Activated CD4-positive, alpha-beta T cell treated with anti-CD3 and anti-CD28 coated beads, Interleukin-2, amount 10 ng/mL, durations not matched to agents 24 days and 14 days (primary cell): ENCODE measurements at regions of chr14 and their contacts with region 1.

Region 1: GRCh38 chr14:63852817-63853731 is at the start of gene SYNE2:
- DNase-seq: peak; percentile 96
- H3K4me3 Mint-ChIP-seq: peak within 1 kb of the TSS; percentile 96
- H3K27ac Mint-ChIP-seq: peak within 1 kb of the TSS; percentile 97
- H3K4me1 Mint-ChIP-seq: peaks cover 36% of the 10 kb centered on the region
- H3K27me3 Mint-ChIP-seq: peaks cover 14% of the 10 kb centered on the region
- total RNA-seq, gene SYNE2: 22.0 and 22.4 TPM in 2 replicates

Region 2: DNA sequence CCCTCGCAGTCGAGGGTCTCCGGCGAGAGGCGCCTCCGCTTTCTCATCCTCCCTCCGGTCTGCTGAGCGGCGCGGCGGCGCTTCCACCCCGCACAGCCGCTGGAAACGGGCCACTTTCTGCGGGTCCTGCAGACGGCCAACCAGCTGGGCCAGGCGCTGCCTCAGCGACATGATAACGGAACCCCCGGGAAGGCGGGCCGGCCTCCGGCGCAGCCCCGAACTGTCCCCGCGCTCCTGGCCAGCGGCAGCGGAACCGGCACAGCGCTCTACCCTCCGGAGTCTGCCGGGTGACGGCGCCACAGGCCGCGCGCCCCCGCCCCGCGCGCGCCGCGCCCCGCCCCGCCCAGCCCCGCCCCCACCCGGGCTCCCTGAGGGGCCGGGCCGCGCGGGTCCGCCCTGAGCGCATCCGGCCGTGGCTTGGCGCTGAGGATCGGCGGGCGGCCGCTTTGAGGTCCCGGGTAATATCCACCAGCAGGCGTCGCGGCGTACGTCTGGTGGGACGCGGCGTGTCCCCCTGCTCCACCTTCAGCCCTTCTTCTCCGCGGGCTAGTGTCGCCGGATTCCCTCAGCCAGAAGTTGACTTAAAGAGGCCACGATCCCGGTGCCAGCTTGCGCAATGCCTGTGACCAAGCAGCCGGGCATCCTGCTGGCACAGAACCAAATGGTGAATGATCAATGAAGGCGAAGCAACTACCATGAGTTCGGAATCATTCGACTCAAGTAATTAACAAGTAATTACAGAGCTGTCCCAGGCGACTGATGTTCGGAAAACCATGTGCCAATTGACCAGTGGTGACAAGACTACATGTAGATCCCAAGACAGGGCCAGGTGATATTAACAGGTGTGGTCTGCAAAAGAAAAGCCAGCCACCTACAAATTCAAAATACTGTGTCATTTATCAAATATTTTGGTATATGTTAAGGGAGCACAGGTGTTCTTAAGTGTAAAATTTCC is 125.0 kb before region 1 on chr14 and contains the start of gene SGPP1:
- intact Hi-C with region 1: loop called (anchors 5 kb)
- DNase-seq: peak; percentile 94
- H3K4me3 Mint-ChIP-seq: peak within 1 kb of the TSS; percentile 100
- H3K27ac Mint-ChIP-seq: peak within 1 kb of the TSS; percentile 98
- H3K4me1 Mint-ChIP-seq: peaks cover 31% of the 10 kb centered on the region
- H3K27me3 Mint-ChIP-seq: peaks cover 19% of the 10 kb centered on the region
- total RNA-seq, gene SGPP1: 12.2 and 13.3 TPM in 2 replicates

Region 3: GRCh38 chr14:63800651-63801375 is 52.3 kb before region 1 on chr14:
- intact Hi-C with region 1: no loop called
- DNase-seq: no peak
- H3K4me3 Mint-ChIP-seq: no peak overlapping the region
- H3K27ac Mint-ChIP-seq: no peak overlapping the region
- H3K4me1 Mint-ChIP-seq: peaks cover 2% of the 10 kb centered on the region
- H3K27me3 Mint-ChIP-seq: peaks cover 15% of the 10 kb centered on the region

Region 4: GRCh38 chr14:63867933-63868921 is 15.2 kb after region 1 on chr14:
- intact Hi-C with region 1: loop called (anchors 1 kb)
- DNase-seq: peak; percentile 81
- H3K4me3 Mint-ChIP-seq: peak overlapping the region; percentile 45
- H3K27ac Mint-ChIP-seq: peak overlapping the region; percentile 15
- H3K4me1 Mint-ChIP-seq: peaks cover 42% of the 10 kb centered on the region
- H3K27me3 Mint-ChIP-seq: no peaks in the 10 kb centered on the region

Region 5: GRCh38 chr14:63901434-63902085 is 48.5 kb after region 1 on chr14:
- intact Hi-C with region 1: loop called (anchors 5 kb)
- DNase-seq: no peak
- H3K4me3 Mint-ChIP-seq: no peak overlapping the region
- H3K27ac Mint-ChIP-seq: no peak overlapping the region
- H3K4me1 Mint-ChIP-seq: peaks cover 26% of the 10 kb centered on the region
- H3K27me3 Mint-ChIP-seq: no peaks in the 10 kb centered on the region

Region 6: GRCh38 chr14:63933110-63933509 is 80.0 kb after region 1 on chr14:
- intact Hi-C with region 1: loop called (anchors 5 kb)
- DNase-seq: peak; percentile 75
- H3K4me3 Mint-ChIP-seq: peak overlapping the region; percentile 40
- H3K27ac Mint-ChIP-seq: peak overlapping the region; percentile 70
- H3K4me1 Mint-ChIP-seq: peaks cover 16% of the 10 kb centered on the region
- H3K27me3 Mint-ChIP-seq: no peaks in the 10 kb centered on the region

Region 7: DNA sequence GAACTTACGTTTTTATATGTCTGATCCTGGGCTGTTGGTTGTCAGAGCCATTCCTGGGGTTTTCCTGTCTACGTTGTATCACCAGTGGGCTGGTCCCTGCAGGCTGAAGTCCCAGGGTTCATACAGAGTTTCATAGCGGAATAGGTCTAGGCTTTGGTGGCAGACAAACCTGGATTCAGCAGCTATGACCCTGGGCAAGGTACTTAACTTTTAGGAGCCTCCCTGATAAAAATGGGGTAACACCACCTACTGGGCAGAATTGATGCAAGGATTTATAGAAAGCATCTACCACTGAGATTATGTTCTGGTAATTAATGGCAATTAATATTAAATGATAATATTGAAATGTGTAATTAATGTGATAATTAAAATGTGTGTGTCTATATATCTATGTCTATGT is 140.9 kb after region 1 on chr14:
- intact Hi-C with region 1: loop called (anchors 5 kb)
- DNase-seq: no peak
- H3K4me3 Mint-ChIP-seq: no peak overlapping the region
- H3K27ac Mint-ChIP-seq: no peak overlapping the region
- H3K4me1 Mint-ChIP-seq: peaks cover 8% of the 10 kb centered on the region
- H3K27me3 Mint-ChIP-seq: no peaks in the 10 kb centered on the region

Region 8: DNA sequence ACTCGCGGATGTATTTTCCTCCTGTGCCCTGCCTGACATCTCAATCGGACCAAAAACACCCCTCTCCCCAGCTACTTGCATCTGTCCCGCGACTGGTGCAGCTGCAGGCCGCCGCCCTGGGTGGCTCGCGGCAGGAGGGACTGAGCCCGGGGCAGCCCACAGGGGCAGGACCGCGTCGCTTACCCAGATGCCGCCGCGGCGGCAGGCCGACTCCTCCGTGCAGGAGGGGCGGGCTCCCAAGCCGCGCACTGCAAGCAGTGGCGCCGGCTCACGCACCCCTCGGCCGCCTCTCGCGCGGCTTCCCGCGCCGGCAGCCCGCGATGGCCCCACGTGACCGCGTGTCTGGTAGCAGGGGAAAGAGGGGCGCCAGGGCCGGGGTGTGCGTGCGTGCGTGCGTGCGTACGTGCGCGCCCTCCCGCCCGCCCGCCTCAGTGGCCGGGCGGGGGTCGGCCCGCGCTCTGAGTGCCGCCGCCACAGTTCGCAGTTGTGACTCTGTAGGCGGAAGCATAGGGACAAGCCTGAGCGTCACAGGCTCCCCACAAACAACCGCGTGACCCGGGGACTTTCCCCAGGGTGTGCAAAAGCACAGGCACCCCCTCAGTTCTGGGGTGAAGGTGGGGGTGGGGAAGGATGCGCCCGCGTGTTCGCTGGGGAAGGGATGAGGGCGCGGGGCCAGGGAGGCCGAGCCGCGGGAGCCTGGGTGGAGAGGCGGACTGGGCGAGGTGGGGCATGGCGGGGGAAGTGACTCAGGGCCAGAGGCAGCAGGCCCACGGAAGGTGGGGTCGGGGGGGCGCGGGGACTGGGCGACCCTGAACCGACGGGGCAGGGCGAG is 650.6 kb after region 1 on chr14 and contains the start of gene ZBTB25:
- intact Hi-C with region 1: loop called (anchors 5 kb)
- DNase-seq: peak; percentile 99
- H3K4me3 Mint-ChIP-seq: peak within 1 kb of the TSS; percentile 94
- H3K27ac Mint-ChIP-seq: peak within 1 kb of the TSS; percentile 100
- H3K4me1 Mint-ChIP-seq: peaks cover 56% of the 10 kb centered on the region
- H3K27me3 Mint-ChIP-seq: peaks cover 1% of the 10 kb centered on the region
- total RNA-seq, gene ZBTB25: 21.8 and 22.2 TPM in 2 replicates